Left ventricle myocardium superior (tissue), 1 donor: ENCODE measurements at regions of chr9 and their contacts with region 1.

Region 1: GRCh38 chr9:87500491-87501270 is 3.0 kb downstream of the DAPK1 start:
- DNase-seq: no peak
- ATAC-seq: no peak

Region 2: GRCh38 chr9:87336914-87337333 is 163.8 kb before region 1 on chr9:
- intact Hi-C with region 1: loop called (anchors 5 kb)
- DNase-seq: no peak
- ATAC-seq: peak; percentile 86

Region 3: DNA sequence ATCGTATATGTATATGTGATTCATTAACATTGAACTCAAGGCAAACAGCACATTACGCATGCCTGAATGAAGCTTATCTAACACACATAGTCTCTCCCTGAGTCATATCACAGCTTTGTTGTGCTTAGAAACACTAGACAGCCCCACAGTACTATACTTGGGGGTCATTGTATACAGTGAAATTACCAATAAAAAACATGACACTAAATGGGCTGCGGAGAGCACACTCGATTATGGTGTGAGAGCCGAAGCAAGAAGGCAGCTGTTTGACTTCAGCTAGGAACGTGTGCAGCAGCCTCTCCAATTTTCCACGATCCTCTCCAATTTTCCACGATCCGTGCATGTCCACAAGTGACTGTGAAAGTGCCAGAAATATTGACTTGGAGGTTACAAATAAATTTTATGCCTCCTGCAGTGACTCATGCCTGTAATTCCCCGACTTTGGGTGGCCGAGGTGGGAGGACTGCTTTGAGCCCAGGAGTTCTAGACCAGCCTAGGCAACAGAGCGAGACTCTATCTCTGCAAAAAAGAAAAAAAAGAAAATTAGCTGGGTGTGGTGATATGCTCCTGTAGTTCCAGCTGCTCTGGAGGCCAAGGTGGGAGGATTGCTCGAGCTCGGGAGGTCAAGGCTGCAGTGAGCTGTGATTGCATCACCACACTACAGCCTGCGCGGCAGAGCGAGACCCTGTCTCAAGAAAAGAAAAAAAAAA is 99.4 kb after region 1 on chr9:
- intact Hi-C with region 1: loop called (anchors 10 kb)
- DNase-seq: no peak
- ATAC-seq: peak; percentile 34